Gastrocnemius medialis (tissue), 4 donors: ENCODE measurements at regions of chr10 and their contacts with region 1.

Region 1: GRCh38 chr10:31864834-31865518 is 63.7 kb downstream of the ARHGAP12 start:
- DNase-seq: no peak
- ATAC-seq: no peak
- H3K4me3 ChIP-seq: peak overlapping the region; percentile 1 to 22 (median 4)
- H3K27ac ChIP-seq: peak overlapping the region in 3 of 4 donors; percentile 31 to 44 (median 41)
- H3K4me1 ChIP-seq: peaks cover 28 to 32% of the 10 kb centered on the region in 2 donors
- H3K27me3 ChIP-seq: no peaks in the 10 kb centered on the region
- CTCF ChIP-seq: no peak
- POLR2A ChIP-seq: no peak

Region 2: GRCh38 chr10:31947144-31947926 is 82.4 kb after region 1 on chr10:
- in situ Hi-C with region 1: loop called in 1 of 4 experiments (anchors 5 kb)
- intact Hi-C with region 1: loop called (anchors 1 kb)
- DNase-seq: peak in 1 of 2 donors; percentile 21
- ATAC-seq: peak; percentile 90 to 91
- H3K4me3 ChIP-seq: peak overlapping the region in 1 of 4 donors; percentile 6
- H3K27ac ChIP-seq: peak overlapping the region in 2 of 4 donors; percentile 11 to 23
- H3K4me1 ChIP-seq: peaks cover 0 to 8% of the 10 kb centered on the region in 2 donors
- H3K27me3 ChIP-seq: no peaks in the 10 kb centered on the region
- CTCF ChIP-seq: peak; percentile 13 to 52 (median 34)
- POLR2A ChIP-seq: no peak

Region 3: DNA sequence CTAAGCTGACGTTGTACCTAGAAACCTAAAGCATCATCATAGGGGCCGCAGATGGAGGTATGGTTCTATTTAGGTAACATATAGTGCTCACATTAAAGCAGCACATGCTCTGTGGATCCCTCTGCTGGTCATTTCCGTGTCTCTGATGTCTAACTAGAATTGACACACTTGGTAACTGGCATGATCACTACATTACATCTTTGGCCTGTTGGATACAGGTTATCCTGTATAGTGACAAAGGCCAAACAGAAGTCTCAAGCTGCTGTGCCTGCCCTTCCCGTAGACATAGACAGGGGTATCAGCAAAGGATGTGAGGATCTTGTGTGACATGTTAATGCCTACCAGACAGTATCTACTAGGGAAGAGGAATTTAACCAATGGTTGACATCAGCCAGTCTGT is 140.1 kb after region 1 on chr10:
- in situ Hi-C with region 1: loop called in 2 of 4 experiments (anchors 10 to 25 kb)
- intact Hi-C with region 1: loop called (anchors 2 kb)
- DNase-seq: no peak
- ATAC-seq: peak; percentile 48 to 65
- H3K4me3 ChIP-seq: no peak overlapping the region
- H3K27ac ChIP-seq: no peak overlapping the region
- H3K4me1 ChIP-seq: peaks cover 12 to 15% of the 10 kb centered on the region in 2 donors
- H3K27me3 ChIP-seq: no peaks in the 10 kb centered on the region
- CTCF ChIP-seq: peak; percentile 24 to 55 (median 36)
- POLR2A ChIP-seq: no peak